ENCODE measurements at regions of chr4 and their contacts with region 1.

Region 1: DNA sequence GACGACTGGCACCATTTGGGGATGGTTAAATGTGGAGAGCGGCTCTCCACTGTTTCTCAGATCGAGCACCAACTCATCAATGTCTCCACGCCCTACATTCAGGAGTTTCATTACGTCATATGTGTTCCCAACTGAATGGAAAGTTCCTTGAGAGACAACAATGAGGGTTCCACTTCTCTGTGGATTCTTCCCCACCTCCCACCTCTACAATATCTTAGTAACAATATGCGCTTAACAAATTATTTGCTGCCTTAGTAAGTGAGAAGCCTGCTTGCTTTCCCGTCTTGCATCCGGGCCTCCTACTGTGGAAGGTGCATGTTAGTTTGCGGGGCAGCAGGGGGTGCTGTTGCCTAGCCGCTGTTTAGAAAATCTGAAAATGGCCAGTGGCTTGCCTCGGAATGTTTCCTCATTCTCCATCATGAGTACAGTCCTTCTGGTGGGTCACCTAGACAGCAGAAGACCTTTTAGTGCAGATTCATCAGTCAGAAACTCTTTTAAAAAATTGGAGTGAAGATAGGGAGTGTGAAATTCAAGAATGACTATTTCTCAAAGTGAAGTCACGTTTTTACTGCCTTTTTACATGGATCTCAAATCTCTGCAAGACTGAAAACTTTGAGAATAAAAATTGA is 55.7 kb downstream of the PHOX2B start:
- DNase-seq: no peak
- ATAC-seq: peak; percentile 80
- H3K4me3 ChIP-seq: no peak overlapping the region
- H3K27ac ChIP-seq: no peak overlapping the region
- H3K4me1 ChIP-seq: no peaks in the 10 kb centered on the region
- H3K27me3 ChIP-seq: no peaks in the 10 kb centered on the region

Region 2: DNA sequence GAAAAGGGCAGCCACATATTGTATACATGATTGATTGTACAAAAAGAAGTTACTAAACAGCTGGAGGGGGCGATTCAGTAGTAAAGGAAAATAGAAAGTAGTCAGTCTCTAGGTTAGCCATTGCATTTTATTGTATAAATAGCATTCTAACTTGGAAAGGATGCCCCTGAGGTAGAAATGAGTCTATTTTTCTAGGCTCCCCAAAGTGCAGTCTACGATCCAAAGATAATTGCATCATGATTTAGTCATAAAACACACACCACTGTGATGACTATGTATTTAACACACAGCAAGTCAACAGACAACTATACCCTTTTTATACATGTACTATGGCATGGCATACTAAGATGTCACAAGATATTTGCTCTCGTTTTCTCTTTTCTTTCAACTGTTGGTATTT is 683.4 kb before region 1 on chr4:
- intact Hi-C with region 1: loop called in 1 of 2 experiments (anchors 5 kb)
- DNase-seq: no peak
- ATAC-seq: no peak
- H3K4me3 ChIP-seq: no peak overlapping the region
- H3K27ac ChIP-seq: no peak overlapping the region
- H3K4me1 ChIP-seq: peaks cover 0 to 6% of the 10 kb centered on the region in 2 donors
- H3K27me3 ChIP-seq: no peaks in the 10 kb centered on the region

Region 3: GRCh38 chr4:41485041-41485440 is 207.8 kb before region 1 on chr4:
- intact Hi-C with region 1: no loop called
- DNase-seq: no peak
- ATAC-seq: no peak
- H3K4me3 ChIP-seq: no peak overlapping the region
- H3K27ac ChIP-seq: no peak overlapping the region
- H3K4me1 ChIP-seq: no peaks in the 10 kb centered on the region
- H3K27me3 ChIP-seq: no peaks in the 10 kb centered on the region

Region 4: DNA sequence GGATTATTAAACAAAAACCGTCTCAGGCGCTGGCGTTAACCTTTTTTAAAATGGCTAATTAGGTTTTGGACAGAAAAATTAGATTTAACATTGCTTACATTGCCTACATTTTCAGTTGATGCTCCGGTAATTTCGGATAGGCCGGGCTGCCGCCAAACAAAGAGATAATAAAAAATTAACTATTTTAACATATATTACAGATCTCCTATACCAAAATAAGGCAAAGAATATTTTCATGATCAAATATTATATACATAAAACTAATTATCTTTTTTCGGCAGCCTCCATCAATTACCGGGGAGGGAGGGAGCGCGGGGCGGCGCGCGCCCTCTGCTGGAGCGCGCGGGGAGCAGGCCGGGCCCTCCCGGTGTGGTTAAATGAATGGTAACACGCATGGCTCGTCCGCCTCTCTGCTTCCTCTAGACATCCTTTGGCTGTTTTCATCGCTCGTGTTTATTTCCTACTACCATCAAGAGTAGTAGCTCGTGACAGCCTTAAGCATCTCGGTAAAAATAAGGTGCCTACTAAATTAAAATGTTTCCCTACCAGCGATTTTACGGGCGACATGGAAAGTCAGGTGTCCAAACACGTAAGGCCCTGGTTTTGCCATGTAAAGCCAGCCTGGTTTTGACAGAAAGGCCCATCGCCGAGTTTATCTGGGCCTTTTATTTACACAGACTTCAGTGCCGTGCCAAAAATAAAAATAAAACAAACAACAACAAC is 190.0 kb after region 1 on chr4:
- intact Hi-C with region 1: loop called (anchors 5 kb)
- DNase-seq: peak in 1 of 2 donors; percentile 84
- ATAC-seq: peak; percentile 84
- H3K4me3 ChIP-seq: peak overlapping the region; percentile 2 to 56
- H3K27ac ChIP-seq: no peak overlapping the region
- H3K4me1 ChIP-seq: no peaks in the 10 kb centered on the region
- H3K27me3 ChIP-seq: no peaks in the 10 kb centered on the region

Region 5: GRCh38 chr4:41887821-41888686 is 195.2 kb after region 1 on chr4:
- intact Hi-C with region 1: loop called (anchors 5 kb)
- DNase-seq: no peak
- ATAC-seq: no peak
- H3K4me3 ChIP-seq: no peak overlapping the region
- H3K27ac ChIP-seq: no peak overlapping the region
- H3K4me1 ChIP-seq: no peaks in the 10 kb centered on the region
- H3K27me3 ChIP-seq: no peaks in the 10 kb centered on the region

Measured in aorta (tissue), 5 donors.